Activated naive CD4-positive, alpha-beta T cell treated with anti-CD3 and anti-CD28 coated beads for 36 hours (primary cell): ENCODE measurements at regions of chr3 and their contacts with region 1.

Region 1: GRCh38 chr3:114152519-114153151 is 26.2 kb downstream of the DRD3 start:
- DNase-seq: peak; percentile 90
- H3K4me3 Mint-ChIP-seq: peak overlapping the region; percentile 43
- H3K27ac Mint-ChIP-seq: peak overlapping the region; percentile 53
- H3K4me1 Mint-ChIP-seq: no peaks in the 10 kb centered on the region
- H3K27me3 Mint-ChIP-seq: no peaks in the 10 kb centered on the region

Region 2: DNA sequence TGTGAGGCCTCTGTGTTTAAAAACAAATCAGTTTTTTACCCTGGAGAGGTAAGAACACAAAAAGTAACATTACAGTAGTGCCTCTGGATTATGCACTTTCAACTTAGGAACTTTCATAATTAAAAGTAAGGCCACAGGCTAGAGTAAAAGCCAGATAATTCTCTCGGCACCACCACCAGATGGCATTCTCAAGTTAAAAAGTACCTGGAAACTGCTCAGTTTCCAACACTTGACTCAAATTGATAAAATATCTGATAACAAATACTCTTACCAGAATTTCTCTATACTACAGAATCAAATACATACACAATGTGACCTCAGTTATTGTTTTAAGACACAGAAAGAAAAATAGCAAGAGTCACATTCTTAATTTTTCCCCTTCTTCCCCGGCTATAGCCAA is 657.6 kb before region 1 on chr3:
- CTCF ChIA-PET with region 1: no interaction called
- intact Hi-C with region 1: no loop called
- DNase-seq: peak; percentile 66
- H3K4me3 Mint-ChIP-seq: no peak overlapping the region
- H3K27ac Mint-ChIP-seq: no peak overlapping the region
- H3K4me1 Mint-ChIP-seq: no peaks in the 10 kb centered on the region
- H3K27me3 Mint-ChIP-seq: no peaks in the 10 kb centered on the region

Region 3: GRCh38 chr3:113838631-113839209 is 313.9 kb before region 1 on chr3 and contains the start of gene GRAMD1C:
- CTCF ChIA-PET with region 1: no interaction called
- intact Hi-C with region 1: loop called (anchors 2 kb)
- DNase-seq: peak; percentile 89
- H3K4me3 Mint-ChIP-seq: peak within 1 kb of the TSS; percentile 75
- H3K27ac Mint-ChIP-seq: no peak within 1 kb of the TSS
- H3K4me1 Mint-ChIP-seq: peaks cover 6% of the 10 kb centered on the region
- H3K27me3 Mint-ChIP-seq: no peaks in the 10 kb centered on the region
- total RNA-seq, gene GRAMD1C: 0.67 to 1.3 TPM

Region 4: GRCh38 chr3:114299421-114299820 is 146.8 kb after region 1 on chr3:
- CTCF ChIA-PET with region 1: interaction called, 6 read pairs
- intact Hi-C with region 1: loop called (anchors 1 kb)
- DNase-seq: peak; percentile 43
- H3K4me3 Mint-ChIP-seq: no peak overlapping the region
- H3K27ac Mint-ChIP-seq: no peak overlapping the region
- H3K4me1 Mint-ChIP-seq: peaks cover 4% of the 10 kb centered on the region
- H3K27me3 Mint-ChIP-seq: no peaks in the 10 kb centered on the region

Region 5: GRCh38 chr3:114336122-114336697 is 183.6 kb after region 1 on chr3:
- CTCF ChIA-PET with region 1: interaction called, 3 read pairs
- intact Hi-C with region 1: loop called (anchors 1 kb)
- DNase-seq: no peak
- H3K4me3 Mint-ChIP-seq: no peak overlapping the region
- H3K27ac Mint-ChIP-seq: no peak overlapping the region
- H3K4me1 Mint-ChIP-seq: peaks cover 18% of the 10 kb centered on the region
- H3K27me3 Mint-ChIP-seq: no peaks in the 10 kb centered on the region

Region 6: DNA sequence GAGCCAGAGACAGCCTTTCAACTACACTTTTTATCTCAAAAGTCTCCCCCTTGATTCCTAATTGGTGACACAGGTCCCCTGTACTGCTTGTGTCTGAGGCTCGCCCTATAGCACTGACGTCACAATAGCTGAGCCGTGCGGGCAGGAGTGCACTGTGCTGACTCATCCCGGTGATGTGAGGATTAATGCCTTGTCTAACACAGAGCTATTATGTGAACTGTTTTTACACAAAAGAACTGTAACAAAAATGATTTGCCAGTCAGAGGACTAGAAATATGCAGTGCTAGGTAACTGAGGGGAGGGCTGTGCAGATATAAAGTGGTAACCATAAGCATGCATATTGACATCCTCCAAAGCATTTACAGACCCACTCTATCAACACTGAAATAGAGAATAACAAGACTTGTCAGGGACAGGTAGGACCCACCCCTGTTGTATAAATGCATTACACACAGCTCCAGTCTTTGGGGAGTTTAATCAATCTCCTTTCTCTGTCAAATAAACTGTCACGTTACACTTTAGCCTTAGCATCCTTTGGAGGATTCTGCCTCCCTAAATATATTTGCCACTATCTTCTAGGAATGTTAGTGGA is 346.2 kb after region 1 on chr3:
- CTCF ChIA-PET with region 1: no interaction called
- intact Hi-C with region 1: loop called (anchors 10 kb)
- DNase-seq: no peak
- H3K4me3 Mint-ChIP-seq: no peak overlapping the region
- H3K27ac Mint-ChIP-seq: no peak overlapping the region
- H3K4me1 Mint-ChIP-seq: peaks cover 36% of the 10 kb centered on the region
- H3K27me3 Mint-ChIP-seq: peaks cover 6% of the 10 kb centered on the region